Left colon (tissue), 2 donors: ENCODE measurements at regions of chr17 and their contacts with region 1.

Region 1: DNA sequence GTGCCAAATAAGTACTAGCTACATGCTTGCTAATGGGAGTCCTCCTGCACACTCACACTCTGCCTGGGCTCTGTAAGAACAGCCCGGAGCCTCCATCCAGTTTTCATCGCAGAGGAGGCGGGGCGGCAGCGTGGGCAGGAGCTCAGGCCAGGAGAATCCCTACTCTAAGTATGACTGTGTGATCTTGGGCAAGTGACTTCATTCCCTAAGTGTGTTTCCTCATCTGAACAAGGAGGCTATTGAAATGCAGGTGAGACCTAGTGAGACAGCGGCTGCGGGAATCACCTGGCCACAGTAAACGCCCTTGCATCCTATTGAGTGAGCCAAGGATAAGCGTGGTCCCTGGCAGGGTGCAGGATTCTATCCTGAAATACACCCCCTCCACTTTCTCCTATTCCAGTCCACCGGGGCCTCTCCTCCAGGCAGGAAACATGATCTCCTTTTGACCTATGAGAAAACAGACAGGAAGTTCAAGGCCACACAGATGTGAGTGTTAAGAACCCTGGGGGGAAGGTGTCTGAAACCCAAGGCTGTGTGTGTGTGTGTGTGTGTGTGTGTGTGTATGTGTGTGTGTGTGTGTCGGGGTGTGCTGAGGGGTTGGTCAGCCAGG is 5.2 kb upstream of the RAI1 start:
- DNase-seq: peak; percentile 5 to 14
- ATAC-seq: peak; percentile 53

Region 2: DNA sequence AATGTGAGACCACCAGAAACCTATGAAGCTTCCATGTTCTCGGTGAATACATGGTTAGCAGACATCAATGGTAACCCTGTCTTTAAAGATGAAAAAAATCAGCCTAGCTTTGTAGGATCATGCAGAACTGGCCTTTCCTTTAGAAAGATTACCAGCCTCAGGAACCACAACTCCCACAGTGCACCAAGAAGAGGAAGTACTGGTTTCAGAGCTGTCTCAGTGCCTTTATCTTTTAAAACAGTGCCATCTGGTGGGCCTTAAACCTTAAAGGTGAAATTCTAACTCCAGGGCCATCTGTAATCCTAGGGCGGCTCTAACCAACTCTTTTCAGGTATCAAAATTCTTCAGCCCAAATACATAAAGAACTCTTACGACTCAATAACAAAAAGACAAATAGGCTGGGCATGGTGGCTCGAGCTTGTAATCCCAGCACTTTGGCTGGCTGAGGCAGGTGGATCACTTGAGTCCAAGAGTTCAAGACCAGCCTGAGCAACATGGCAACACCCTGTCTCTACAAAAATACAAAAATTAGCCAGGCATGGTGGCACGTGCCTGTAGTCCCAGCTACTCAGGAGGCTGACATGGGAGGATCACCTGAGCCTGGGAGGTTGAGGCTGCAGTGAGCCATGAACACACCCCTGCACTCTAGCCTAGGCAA is 357.5 kb after region 1 on chr17:
- intact Hi-C with region 1: loop called in 1 of 2 experiments (anchors 5 kb)
- DNase-seq: peak; percentile 42 to 48
- ATAC-seq: peak; percentile 92